Adrenal gland (tissue), 19 donors: ENCODE measurements at regions of chr3 and their contacts with region 1.

Region 1: GRCh38 chr3:130539005-130539404 is 22.0 kb downstream of the COL6A6 start:
- DNase-seq: peak; percentile 25 to 70 (median 50)
- H3K4me3 ChIP-seq: no peak overlapping the region
- H3K27ac ChIP-seq: no peak overlapping the region
- H3K4me1 ChIP-seq: no peaks in the 10 kb centered on the region
- H3K27me3 ChIP-seq: no peaks in the 10 kb centered on the region
- CTCF ChIP-seq: peak; percentile 37 to 59 (median 52)
- POLR2A ChIP-seq: no peak

Region 2: GRCh38 chr3:130276203-130276803 is 262.7 kb before region 1 on chr3:
- intact Hi-C with region 1: loop called in 1 of 2 experiments (anchors 10 kb)
- DNase-seq: peak in 3 of 7 donors; percentile 22 to 26 (median 24)
- H3K4me3 ChIP-seq: no peak overlapping the region
- H3K27ac ChIP-seq: no peak overlapping the region
- H3K4me1 ChIP-seq: no peaks in the 10 kb centered on the region
- H3K27me3 ChIP-seq: no peaks in the 10 kb centered on the region
- CTCF ChIP-seq: peak; percentile 59 to 82 (median 71)
- POLR2A ChIP-seq: no peak

Region 3: DNA sequence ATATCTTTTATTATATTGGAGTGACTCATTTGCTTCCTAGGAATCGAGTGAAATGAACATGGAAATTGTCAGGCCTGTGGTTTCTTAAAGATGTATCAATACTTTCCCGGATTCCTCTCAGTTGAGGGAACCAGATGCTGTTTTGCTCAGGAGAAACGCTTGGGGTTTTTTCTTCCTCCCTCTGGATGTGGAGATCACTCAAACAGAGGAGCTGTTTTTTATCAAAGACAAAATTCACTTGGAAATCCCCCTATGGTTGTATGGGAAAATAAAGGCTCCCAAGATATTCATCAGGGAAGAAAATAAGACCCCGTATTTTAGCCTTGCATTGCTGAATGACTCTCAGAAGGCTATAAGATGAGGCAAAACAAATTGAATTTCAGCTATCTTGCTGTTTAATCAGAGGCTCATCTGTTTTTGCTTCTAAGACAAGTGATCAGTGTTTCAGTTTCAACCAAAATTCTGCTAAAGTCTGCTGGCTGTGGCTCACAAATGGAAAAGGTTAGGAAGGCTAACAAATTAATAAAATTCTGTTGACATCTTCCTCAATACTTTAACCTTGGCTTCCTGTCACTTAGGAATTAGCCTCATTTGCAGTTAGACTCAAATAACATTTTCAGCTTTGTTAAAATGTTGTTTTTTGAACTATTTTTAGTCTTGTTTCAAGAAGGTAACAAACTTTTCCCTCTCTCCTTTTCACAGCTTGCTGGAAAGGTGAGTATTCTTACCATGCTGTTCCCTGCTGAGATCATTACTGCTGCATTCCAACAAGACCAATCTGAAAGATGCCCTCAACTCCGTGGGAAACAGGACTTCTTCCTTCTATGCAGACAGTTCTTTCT is 109.9 kb before region 1 on chr3:
- intact Hi-C with region 1: no loop called
- DNase-seq: no peak
- H3K4me3 ChIP-seq: no peak overlapping the region
- H3K27ac ChIP-seq: no peak overlapping the region
- H3K4me1 ChIP-seq: no peaks in the 10 kb centered on the region
- H3K27me3 ChIP-seq: no peaks in the 10 kb centered on the region
- CTCF ChIP-seq: no peak
- POLR2A ChIP-seq: no peak